Sciatic nerve (tissue), 2 donors: ENCODE measurements at regions of chr6 and their contacts with region 1.

Region 1: GRCh38 chr6:110873981-110874879 is at the start of gene AMD1:
- DNase-seq: peak; percentile 99
- ATAC-seq: peak; percentile 94
- total RNA-seq, gene AMD1: 65.9 TPM

Region 2: GRCh38 chr6:110421749-110422443 is 452.3 kb before region 1 on chr6:
- intact Hi-C with region 1: no loop called
- DNase-seq: no peak
- ATAC-seq: no peak

Region 3: DNA sequence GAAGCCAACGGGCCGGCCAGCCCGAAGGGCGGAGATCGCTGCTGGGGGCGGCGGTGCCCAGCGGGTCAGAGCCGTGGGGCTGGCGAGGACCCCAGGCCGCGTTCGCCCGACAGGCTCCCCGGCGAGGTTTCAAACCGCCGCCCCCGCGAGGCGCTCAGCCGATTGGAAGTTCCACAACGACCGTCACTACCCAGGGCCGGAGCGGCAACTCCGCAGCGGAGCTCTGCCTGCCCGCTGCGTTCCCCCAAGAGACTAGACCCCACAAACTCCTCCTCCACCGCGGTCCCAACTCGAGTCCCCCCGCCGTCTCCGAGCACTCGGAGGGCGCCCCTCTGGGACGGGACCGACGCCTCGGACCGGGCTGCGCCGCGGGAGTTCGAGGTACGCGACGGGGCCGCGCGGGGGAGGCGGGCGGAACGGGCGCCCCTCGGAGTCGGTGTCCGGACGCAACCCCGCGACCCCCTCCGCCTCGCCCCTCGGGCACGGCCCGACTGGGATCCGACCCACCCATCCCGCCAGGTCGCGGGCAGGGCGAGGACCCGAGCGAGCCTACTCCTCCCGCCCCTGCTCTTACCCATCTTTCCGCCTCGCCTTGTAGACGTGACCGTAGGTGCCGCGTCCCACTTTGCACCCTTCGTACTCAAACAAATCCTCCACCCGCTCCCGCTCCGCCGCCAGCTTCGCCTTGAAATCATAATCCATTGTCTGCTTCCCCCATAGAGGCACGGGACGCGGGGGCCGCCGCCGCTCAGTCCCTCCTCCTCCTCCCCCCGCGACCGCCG is 59.6 kb before region 1 on chr6:
- intact Hi-C with region 1: loop called (anchors 1 kb)
- DNase-seq: peak; percentile 76
- ATAC-seq: peak; percentile 0

Region 4: GRCh38 chr6:110890288-110890687 is 16.1 kb after region 1 on chr6:
- intact Hi-C with region 1: no loop called
- DNase-seq: no peak
- ATAC-seq: no peak